HepG2 (cell line): ENCODE measurements at regions of chr6 and their contacts with region 1.

Region 1: GRCh38 chr6:12967686-12968085 is 251.1 kb downstream of the PHACTR1 start:
- DNase-seq: no peak
- ATAC-seq: no peak
- H3K4me3 ChIP-seq: no peak overlapping the region
- H3K27ac ChIP-seq: no peak overlapping the region
- H3K4me1 ChIP-seq: no peaks in the 10 kb centered on the region
- H3K27me3 ChIP-seq: peaks cover 0 to 28% of the 10 kb centered on the region in 2 experiments; a peak in 3 of 5 replicates
- CTCF ChIP-seq: no peak
- EP300 ChIP-seq: no peak
- POLR2A ChIP-seq: no peak
- RAD21 ChIP-seq: no peak

Region 2: GRCh38 chr6:12832226-12832735 is 135.4 kb before region 1 on chr6:
- CTCF ChIA-PET with region 1: no interaction called
- POLR2A ChIA-PET with region 1: no interaction called
- in situ Hi-C with region 1: no loop called
- intact Hi-C with region 1: no loop called
- DNase-seq: no peak
- ATAC-seq: no peak
- H3K4me3 ChIP-seq: no peak overlapping the region
- H3K27ac ChIP-seq: no peak overlapping the region
- H3K4me1 ChIP-seq: no peaks in the 10 kb centered on the region
- H3K27me3 ChIP-seq: 0 out of 5 replicates have a peak, but pooled peaks cover 0 to 3% of the 10 kb centered on the region in 2 experiments
- CTCF ChIP-seq: no peak
- EP300 ChIP-seq: no peak
- POLR2A ChIP-seq: no peak
- RAD21 ChIP-seq: no peak

Region 3: GRCh38 chr6:13001927-13002326 is 34.2 kb after region 1 on chr6:
- CTCF ChIA-PET with region 1: no interaction called
- POLR2A ChIA-PET with region 1: no interaction called
- in situ Hi-C with region 1: no loop called
- intact Hi-C with region 1: loop called (anchors 1 kb)
- DNase-seq: no peak
- ATAC-seq: no peak
- H3K4me3 ChIP-seq: no peak overlapping the region
- H3K27ac ChIP-seq: no peak overlapping the region
- H3K4me1 ChIP-seq: no peaks in the 10 kb centered on the region
- H3K27me3 ChIP-seq: no peaks in the 10 kb centered on the region
- CTCF ChIP-seq: no peak
- EP300 ChIP-seq: no peak
- POLR2A ChIP-seq: no peak
- RAD21 ChIP-seq: no peak

Region 4: DNA sequence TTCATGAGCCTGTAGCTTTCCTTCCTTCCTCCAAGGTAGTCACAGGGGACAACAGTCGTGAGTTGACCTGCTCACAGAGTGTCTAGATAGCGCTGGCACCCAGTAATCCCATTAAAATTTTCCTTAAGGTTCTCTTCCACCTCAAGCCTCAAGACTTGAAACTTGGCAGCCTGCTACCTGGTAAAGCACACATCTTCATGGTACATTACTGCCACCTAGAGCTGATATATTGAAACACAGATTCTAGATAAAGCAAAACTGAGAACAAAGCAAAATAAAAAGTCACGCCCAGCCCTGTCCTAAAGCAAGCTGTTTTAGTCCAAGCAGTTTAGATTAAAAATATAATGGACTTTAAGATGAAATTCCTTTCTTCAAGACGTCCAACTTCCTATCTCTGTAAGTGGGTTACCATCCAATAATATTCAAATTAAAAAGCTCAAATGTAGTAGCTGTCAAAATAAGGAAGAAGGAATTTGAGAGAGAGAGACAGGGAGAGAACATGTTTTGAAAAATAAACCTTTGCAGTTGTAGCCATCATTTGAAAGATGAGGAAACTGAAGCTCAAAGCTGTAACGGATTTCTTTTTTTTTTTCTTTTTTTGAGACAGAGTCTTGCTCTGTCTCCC is 1099.2 kb after region 1 on chr6:
- CTCF ChIA-PET with region 1: no interaction called
- POLR2A ChIA-PET with region 1: no interaction called
- in situ Hi-C with region 1: no loop called
- intact Hi-C with region 1: no loop called
- DNase-seq: peak; percentile 55
- ATAC-seq: peak; percentile 79
- H3K4me3 ChIP-seq: no peak overlapping the region
- H3K27ac ChIP-seq: no peak overlapping the region
- H3K4me1 ChIP-seq: no peaks in the 10 kb centered on the region
- H3K27me3 ChIP-seq: peaks cover 1 to 3% of the 10 kb centered on the region in 2 experiments; a peak in 1 of 5 replicates
- CTCF ChIP-seq: peak; percentile 76
- EP300 ChIP-seq: no peak
- POLR2A ChIP-seq: no peak
- RAD21 ChIP-seq: peak; percentile 49; the same call in 1 of the 2 replicates